Mammary epithelial cell (primary cell): ENCODE measurements at regions of chr10 and their contacts with region 1.

Region 1: DNA sequence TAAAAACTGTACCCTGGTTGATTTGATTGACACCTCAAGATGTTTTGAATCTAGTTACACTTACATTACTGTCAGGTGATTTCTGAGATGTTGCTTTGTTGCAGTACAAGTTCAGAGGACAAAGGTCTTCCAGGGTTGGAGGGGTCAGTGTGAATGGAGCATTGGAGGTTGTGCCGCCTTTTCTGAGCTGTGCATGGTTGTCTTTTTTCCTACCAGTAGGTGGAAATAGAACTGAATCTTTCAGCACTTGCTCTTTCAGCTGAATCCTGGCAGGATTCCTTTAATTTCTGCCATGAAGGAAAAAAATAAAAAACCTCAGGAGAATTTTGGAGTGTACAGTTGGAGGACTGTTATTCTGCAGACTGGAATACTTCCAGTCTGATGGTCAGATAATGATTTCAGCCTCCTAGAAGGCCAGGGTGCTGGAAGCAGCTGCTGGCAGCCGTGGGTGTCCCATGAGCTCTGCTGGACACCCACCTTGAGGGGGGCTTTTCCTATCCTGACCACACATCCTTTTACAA is 82.7 kb downstream of the PLCE1 start:
- DNase-seq: no peak
- H3K4me3 ChIP-seq: no peak overlapping the region
- H3K27ac ChIP-seq: no peak overlapping the region
- H3K4me1 ChIP-seq: no peaks in the 10 kb centered on the region
- H3K27me3 ChIP-seq: peaks cover 1% of the 10 kb centered on the region
- CTCF ChIP-seq: peak in 1 of 2 donors; percentile 43

Region 2: GRCh38 chr10:94225589-94225988 is 149.2 kb after region 1 on chr10:
- CTCF ChIA-PET with region 1: no interaction called
- dilution Hi-C with region 1: no loop called
- in situ Hi-C with region 1: no loop called
- intact Hi-C with region 1: loop called (anchors 1 kb)
- DNase-seq: no peak
- H3K4me3 ChIP-seq: no peak overlapping the region
- H3K27ac ChIP-seq: no peak overlapping the region
- H3K4me1 ChIP-seq: no peaks in the 10 kb centered on the region
- H3K27me3 ChIP-seq: no peaks in the 10 kb centered on the region
- CTCF ChIP-seq: peak; percentile 20 to 39